Endothelial cell of umbilical vein (primary cell): ENCODE measurements at regions of chr7 and their contacts with region 1.

Region 1: GRCh38 chr7:32588657-32589056 is 93.4 kb downstream of the AVL9 start:
- DNase-seq: peak; percentile 85
- H3K4me3 ChIP-seq: no peak overlapping the region
- H3K27ac ChIP-seq: peak overlapping the region; percentile 91
- H3K4me1 ChIP-seq: peaks cover 49% of the 10 kb centered on the region
- H3K27me3 ChIP-seq: no peaks in the 10 kb centered on the region
- CTCF ChIP-seq: peak in 1 of 2 donors; percentile 6
- POLR2A ChIP-seq: no peak

Region 2: GRCh38 chr7:32490127-32490822 is 98.4 kb before region 1 on chr7 and contains the start of gene LSM5:
- CTCF ChIA-PET with region 1: interaction called, 7 read pairs
- POLR2A ChIA-PET with region 1: interaction called, 7 read pairs
- dilution Hi-C with region 1: no loop called
- intact Hi-C with region 1: loop called (anchors 1 kb)
- DNase-seq: peak; percentile 94
- H3K4me3 ChIP-seq: peak within 1 kb of the TSS; percentile 38 to 86 (median 73)
- H3K27ac ChIP-seq: peak within 1 kb of the TSS; percentile 34
- H3K4me1 ChIP-seq: peaks cover 11% of the 10 kb centered on the region
- H3K27me3 ChIP-seq: no peaks in the 10 kb centered on the region
- CTCF ChIP-seq: no peak
- POLR2A ChIP-seq: peak; percentile 84
- total RNA-seq, gene LSM5: 63.3 and 68.1 TPM in 2 replicates

Region 3: DNA sequence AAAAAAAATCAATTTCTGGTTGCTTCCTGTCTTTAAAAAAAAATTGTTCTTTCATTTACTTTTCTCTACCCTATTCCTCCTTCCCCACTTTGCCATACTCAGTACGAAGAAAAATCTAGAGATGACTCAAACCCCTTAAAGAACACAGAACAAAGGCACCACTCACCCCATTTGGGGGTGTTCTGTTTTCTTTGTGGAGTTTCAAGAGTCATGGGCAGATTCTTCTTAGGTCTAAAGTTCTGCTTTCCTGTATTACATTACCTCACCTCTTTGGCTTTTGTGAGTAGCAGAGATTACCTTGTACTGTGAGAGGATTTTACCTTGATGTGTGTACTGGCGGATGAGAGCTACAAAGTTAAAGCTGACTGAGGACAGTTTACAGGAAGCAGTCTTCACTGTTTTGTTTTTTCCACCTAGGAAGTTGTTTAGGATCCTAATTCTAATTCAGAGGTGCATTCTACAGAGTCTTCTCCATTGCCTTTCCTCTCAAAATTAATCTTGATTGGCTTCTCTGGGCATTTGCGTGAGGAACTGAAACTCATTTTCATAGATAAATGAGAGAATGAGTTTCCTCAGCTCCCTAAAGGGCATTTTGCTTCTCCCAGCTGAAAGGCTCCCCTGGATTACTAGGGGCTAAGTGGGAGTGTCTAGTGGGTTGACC is 72.6 kb before region 1 on chr7:
- CTCF ChIA-PET with region 1: no interaction called
- POLR2A ChIA-PET with region 1: no interaction called
- dilution Hi-C with region 1: no loop called
- intact Hi-C with region 1: no loop called
- DNase-seq: no peak
- H3K4me3 ChIP-seq: no peak overlapping the region
- H3K27ac ChIP-seq: no peak overlapping the region
- H3K4me1 ChIP-seq: no peaks in the 10 kb centered on the region
- H3K27me3 ChIP-seq: no peaks in the 10 kb centered on the region
- CTCF ChIP-seq: no peak
- POLR2A ChIP-seq: no peak

Region 4: GRCh38 chr7:32536585-32536984 is 52.1 kb before region 1 on chr7:
- CTCF ChIA-PET with region 1: no interaction called
- POLR2A ChIA-PET with region 1: no interaction called
- dilution Hi-C with region 1: no loop called
- intact Hi-C with region 1: loop called (anchors 1 kb)
- DNase-seq: peak; percentile 89
- H3K4me3 ChIP-seq: no peak overlapping the region
- H3K27ac ChIP-seq: peak overlapping the region; percentile 41
- H3K4me1 ChIP-seq: peaks cover 9% of the 10 kb centered on the region
- H3K27me3 ChIP-seq: no peaks in the 10 kb centered on the region
- CTCF ChIP-seq: no peak
- POLR2A ChIP-seq: no peak

Region 5: GRCh38 chr7:32611201-32612099 is 22.8 kb after region 1 on chr7:
- CTCF ChIA-PET with region 1: no interaction called
- POLR2A ChIA-PET with region 1: no interaction called
- dilution Hi-C with region 1: no loop called
- intact Hi-C with region 1: no loop called
- DNase-seq: no peak
- H3K4me3 ChIP-seq: no peak overlapping the region
- H3K27ac ChIP-seq: no peak overlapping the region
- H3K4me1 ChIP-seq: no peaks in the 10 kb centered on the region
- H3K27me3 ChIP-seq: no peaks in the 10 kb centered on the region
- CTCF ChIP-seq: no peak
- POLR2A ChIP-seq: no peak

Region 6: GRCh38 chr7:32670110-32671025 is 81.7 kb after region 1 on chr7:
- CTCF ChIA-PET with region 1: interaction called, 3 read pairs
- POLR2A ChIA-PET with region 1: no interaction called
- dilution Hi-C with region 1: no loop called
- intact Hi-C with region 1: loop called (anchors 5 kb)
- DNase-seq: peak; percentile 74
- H3K4me3 ChIP-seq: no peak overlapping the region
- H3K27ac ChIP-seq: no peak overlapping the region
- H3K4me1 ChIP-seq: peaks cover 15% of the 10 kb centered on the region
- H3K27me3 ChIP-seq: no peaks in the 10 kb centered on the region
- CTCF ChIP-seq: no peak
- POLR2A ChIP-seq: no peak

Region 7: GRCh38 chr7:32694182-32694581 is 105.5 kb after region 1 on chr7:
- CTCF ChIA-PET with region 1: no interaction called
- POLR2A ChIA-PET with region 1: no interaction called
- dilution Hi-C with region 1: no loop called
- intact Hi-C with region 1: no loop called
- DNase-seq: no peak
- H3K4me3 ChIP-seq: no peak overlapping the region
- H3K27ac ChIP-seq: no peak overlapping the region
- H3K4me1 ChIP-seq: no peaks in the 10 kb centered on the region
- H3K27me3 ChIP-seq: no peaks in the 10 kb centered on the region
- CTCF ChIP-seq: no peak
- POLR2A ChIP-seq: no peak

Region 8: DNA sequence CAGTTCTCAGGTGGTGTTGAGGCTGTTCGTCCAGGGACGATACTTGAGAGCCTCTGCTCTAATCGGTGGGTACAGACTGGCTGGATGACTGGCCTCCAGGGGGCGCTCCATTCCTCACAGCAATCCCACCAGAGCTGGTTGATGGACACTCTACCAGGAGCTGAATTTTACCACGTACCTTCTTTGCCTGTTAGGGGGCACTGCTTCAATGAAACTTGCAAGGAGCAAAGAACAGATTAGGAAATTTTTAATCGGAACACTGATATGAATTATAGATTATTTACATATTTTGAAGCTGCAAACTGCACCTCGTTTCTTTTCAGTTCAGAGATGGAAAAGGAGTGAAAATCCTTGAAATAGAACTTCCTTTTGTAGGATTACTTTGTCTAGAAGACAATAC is 258.0 kb after region 1 on chr7:
- CTCF ChIA-PET with region 1: no interaction called
- POLR2A ChIA-PET with region 1: no interaction called
- dilution Hi-C with region 1: no loop called
- intact Hi-C with region 1: no loop called
- DNase-seq: peak; percentile 79
- H3K4me3 ChIP-seq: no peak overlapping the region
- H3K27ac ChIP-seq: no peak overlapping the region
- H3K4me1 ChIP-seq: no peaks in the 10 kb centered on the region
- H3K27me3 ChIP-seq: no peaks in the 10 kb centered on the region
- CTCF ChIP-seq: peak; percentile 73 to 88
- POLR2A ChIP-seq: no peak

Region 9: DNA sequence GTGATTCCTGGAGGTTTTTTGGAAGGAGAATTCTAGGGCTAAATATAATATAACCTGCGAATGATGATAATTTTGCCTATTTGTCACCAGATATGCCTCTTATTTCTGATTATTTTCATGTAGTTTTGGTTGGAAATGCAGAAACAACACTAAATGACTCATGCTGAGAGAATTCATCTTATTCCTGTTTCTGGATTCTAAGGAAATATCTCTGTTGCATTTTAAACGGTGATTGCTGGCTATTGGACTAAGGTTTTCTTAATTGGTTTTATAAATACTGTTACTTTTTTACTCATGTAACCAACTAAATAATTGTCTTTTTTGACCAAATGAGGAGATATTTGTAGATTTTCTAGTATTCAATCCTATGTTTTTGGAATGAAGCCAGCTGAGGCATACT is 1864.5 kb after region 1 on chr7:
- CTCF ChIA-PET with region 1: no interaction called
- POLR2A ChIA-PET with region 1: no interaction called
- dilution Hi-C with region 1: no loop called
- intact Hi-C with region 1: loop called (anchors 10 kb)
- DNase-seq: peak; percentile 71
- H3K4me3 ChIP-seq: peak overlapping the region in 1 of 3 experiments; percentile 27
- H3K27ac ChIP-seq: peak overlapping the region; percentile 63
- H3K4me1 ChIP-seq: peaks cover 30% of the 10 kb centered on the region
- H3K27me3 ChIP-seq: no peaks in the 10 kb centered on the region
- CTCF ChIP-seq: no peak
- POLR2A ChIP-seq: no peak